ENCODE measurements at regions of chr18 and their contacts with region 1.

Region 1: DNA sequence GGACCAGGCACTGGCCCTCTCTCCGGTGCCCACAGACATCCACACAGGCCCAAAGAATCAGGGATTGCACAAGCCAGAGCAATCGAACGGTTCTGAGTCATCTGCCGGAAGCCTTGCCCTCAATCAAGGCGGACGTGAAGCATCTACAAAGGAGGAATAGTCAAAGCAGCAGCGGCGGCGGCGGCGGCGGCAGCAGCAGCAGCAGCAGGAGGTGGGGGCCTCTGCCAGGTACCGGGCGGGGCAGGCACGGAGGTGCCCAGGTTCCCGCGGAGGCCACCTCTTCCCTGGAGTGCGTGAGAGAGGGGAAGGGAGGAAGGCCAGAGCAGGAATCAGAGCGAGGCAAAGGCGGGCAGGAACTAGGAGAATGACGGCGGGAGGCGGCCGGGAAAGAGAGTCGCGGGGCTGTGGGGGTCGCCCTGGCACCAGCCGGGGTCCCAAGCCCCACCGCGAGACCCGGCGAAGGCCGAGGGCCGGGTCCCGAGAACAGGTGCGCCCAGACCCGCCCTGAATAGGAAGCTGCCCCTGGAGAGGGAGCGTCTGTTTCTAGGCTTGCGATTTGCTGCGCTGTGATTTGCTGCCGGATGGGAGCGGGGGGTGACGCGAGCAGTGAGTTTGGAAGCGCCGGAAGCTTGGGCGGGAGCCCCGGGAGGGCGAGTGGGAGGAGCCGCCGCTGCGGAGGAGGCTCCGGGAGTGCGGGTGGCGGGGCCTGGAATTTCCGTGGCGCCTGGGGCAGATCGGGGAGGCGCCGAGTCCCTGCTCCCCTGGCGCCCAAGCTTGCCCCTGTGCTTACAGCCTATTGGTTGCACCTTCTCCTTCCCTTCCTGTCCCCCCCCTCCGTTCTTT is at the start of gene SERPINB8:
- DNase-seq: peak; percentile 94 to 95
- H3K4me3 ChIP-seq: peak within 1 kb of the TSS; percentile 85 to 93 (median 88)
- H3K27ac ChIP-seq: peak within 1 kb of the TSS; percentile 99
- H3K4me1 ChIP-seq: peaks cover 0 to 7% of the 10 kb centered on the region in 2 donors
- H3K27me3 ChIP-seq: no peaks in the 10 kb centered on the region
- CTCF ChIP-seq: no peak
- POLR2A ChIP-seq: peak; percentile 74
- total RNA-seq, gene SERPINB8: 13.1 to 16.0 (median 13.5) TPM

Region 2: GRCh38 chr18:63936156-63936931 is 33.8 kb before region 1 on chr18:
- intact Hi-C with region 1: loop called (anchors 1 kb)
- DNase-seq: peak; percentile 59 to 75
- H3K4me3 ChIP-seq: peak overlapping the region; percentile 38 to 74 (median 51)
- H3K27ac ChIP-seq: no peak overlapping the region
- H3K4me1 ChIP-seq: no peaks in the 10 kb centered on the region
- H3K27me3 ChIP-seq: peaks cover 3 to 4% of the 10 kb centered on the region in 2 donors
- CTCF ChIP-seq: peak; percentile 28 to 66 (median 60)
- POLR2A ChIP-seq: no peak